ENCODE measurements at regions of chr7 and their contacts with region 1.

Region 1: DNA sequence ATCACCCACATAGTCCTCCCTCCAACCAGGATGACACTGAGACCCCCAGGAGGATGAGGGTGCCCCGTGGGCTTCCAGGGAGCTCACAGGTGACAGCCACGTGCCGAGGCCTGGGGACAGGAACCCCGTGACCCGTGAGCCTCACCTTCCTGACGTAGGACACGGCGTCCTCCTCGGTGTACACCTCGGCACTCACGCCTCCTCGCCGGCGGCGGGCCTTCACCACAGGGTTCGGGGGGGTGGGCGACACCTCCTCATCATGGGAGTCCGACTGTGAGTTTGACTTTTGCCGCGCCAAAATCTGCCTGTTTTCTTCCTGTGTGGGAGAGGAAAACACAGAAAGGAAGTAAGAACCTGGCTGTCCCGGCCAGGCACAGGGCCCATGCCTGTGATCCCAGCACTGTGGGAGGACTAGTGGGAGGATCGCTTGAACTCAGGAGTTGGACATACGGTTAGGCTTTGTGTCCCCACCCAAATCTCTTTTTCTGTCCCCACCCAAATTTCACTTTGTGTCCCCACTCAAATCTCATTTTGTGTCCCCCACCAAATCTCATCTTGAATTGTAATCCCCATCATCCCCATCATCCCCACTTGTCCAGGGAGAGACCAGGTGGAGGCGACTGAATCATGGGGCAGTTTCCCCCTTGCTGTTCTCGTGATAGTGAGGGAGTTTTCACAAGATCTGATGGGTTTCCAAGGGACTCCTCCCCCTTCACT is 45.9 kb upstream of the DNAAF5 start:
- DNase-seq: no peak
- H3K4me3 ChIP-seq: no peak overlapping the region
- H3K27ac ChIP-seq: no peak overlapping the region
- H3K4me1 ChIP-seq: no peaks in the 10 kb centered on the region
- CTCF ChIP-seq: no peak

Region 2: GRCh38 chr7:164941-165660 is 515.5 kb before region 1 on chr7:
- CTCF ChIA-PET with region 1: interaction called, 13 read pairs
- POLR2A ChIA-PET with region 1: no interaction called
- intact Hi-C with region 1: no loop called
- DNase-seq: no peak
- H3K4me3 ChIP-seq: no peak overlapping the region
- H3K27ac ChIP-seq: no peak overlapping the region
- H3K4me1 ChIP-seq: no peaks in the 10 kb centered on the region
- CTCF ChIP-seq: no peak

Region 3: DNA sequence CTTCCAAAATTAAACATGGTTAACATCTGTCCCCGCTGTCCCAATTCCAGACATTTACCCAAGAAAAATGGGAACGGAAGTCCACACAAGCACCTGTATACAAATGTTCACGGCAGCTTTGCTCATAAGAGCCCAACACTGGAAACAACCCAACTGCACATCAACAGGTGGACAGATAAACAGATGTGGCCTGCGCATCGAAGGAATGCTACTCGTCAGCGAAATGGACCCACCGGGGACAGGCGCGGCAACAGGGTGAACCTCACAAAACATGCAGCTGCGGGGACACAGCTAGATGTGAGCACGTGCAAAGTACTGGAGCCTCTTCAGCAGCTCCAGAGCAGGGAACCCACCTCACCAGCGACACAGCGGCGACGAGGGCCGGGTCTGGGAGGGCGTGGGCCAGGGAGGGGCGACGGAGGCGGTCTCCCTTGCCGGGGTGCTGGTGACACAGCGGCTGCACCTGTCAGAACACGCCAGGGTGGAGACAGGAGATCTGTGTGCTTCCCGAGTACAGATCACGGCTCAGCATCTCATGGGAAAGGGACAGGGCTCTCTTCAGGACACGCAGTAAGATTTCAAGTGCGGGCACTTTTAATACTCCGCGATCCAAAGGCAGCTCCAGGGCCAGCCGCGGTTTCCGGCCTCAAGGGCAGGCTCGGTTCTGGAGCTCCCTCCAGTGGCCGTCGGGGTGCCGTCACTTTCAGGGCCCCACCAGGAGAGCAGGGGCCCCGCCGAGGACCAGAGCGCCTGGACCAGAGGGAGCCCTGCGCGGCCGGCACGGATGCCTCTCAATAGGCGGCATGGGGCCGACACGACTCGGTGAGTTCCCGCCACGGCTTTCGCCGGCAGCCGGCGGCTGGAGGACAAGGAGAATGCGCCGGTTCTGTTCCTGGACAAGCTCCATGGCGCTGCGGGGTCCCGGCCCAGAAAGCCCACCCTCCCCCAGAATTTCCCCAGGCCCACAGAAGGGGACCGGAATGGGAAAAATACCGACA is 385.0 kb after region 1 on chr7:
- CTCF ChIA-PET with region 1: no interaction called
- POLR2A ChIA-PET with region 1: no interaction called
- intact Hi-C with region 1: no loop called
- DNase-seq: peak; percentile 80
- H3K4me3 ChIP-seq: peak overlapping the region; percentile 38
- H3K27ac ChIP-seq: no peak overlapping the region
- H3K4me1 ChIP-seq: peaks cover 51% of the 10 kb centered on the region
- CTCF ChIP-seq: peak; percentile 88